Mammary epithelial cell (primary cell): ENCODE measurements at regions of chr9 and their contacts with region 1.

Region 1: GRCh38 chr9:69919461-69920061 is 98.9 kb downstream of the CFAP95 start:
- DNase-seq: peak; percentile 45
- H3K4me3 ChIP-seq: no peak overlapping the region
- H3K27ac ChIP-seq: no peak overlapping the region
- H3K4me1 ChIP-seq: peaks cover 14% of the 10 kb centered on the region
- H3K27me3 ChIP-seq: no peaks in the 10 kb centered on the region
- CTCF ChIP-seq: peak; percentile 64 to 70

Region 2: DNA sequence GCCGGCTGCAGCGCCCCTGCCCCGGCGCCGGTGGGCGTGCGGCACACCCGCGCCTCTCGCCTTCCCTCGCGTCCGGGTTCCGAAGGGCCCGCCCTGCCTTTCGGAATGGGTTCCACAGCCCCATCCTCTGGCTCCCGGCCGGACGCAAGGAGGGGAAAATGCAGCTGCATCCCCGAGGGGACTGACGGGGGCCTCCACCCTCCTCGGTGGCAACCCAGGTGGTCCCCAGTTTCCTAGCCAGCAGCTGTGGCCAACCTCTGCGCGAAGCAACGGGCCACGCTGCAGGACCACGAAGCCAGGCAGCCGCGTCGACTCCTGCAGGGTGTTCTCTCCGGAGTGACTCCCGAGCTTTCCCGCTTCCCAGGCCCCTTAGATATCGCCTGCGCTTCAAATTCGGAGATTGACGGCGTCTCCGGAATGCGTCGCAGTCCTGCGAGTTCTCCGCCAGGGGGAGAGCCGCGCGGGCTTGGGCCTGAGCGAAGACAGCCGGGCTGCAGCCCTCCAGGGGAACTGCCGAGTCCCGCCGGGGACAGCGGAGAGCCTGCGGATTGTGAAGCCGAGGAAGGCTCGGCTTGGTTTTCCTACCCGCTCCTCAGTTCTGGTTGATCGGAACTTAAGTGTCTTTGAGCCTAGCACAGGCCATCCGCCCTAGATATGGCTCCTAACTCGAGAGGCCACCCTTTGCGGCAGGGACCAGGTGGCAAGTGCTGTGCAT is 246.8 kb before region 1 on chr9:
- CTCF ChIA-PET with region 1: no interaction called
- dilution Hi-C with region 1: no loop called
- in situ Hi-C with region 1: loop called in 1 of 2 experiments (anchors 25 kb)
- intact Hi-C with region 1: loop called (anchors 2 kb)
- DNase-seq: peak; percentile 79
- H3K4me3 ChIP-seq: peak overlapping the region; percentile 47 to 71 (median 69)
- H3K27ac ChIP-seq: no peak overlapping the region
- H3K4me1 ChIP-seq: peaks cover 33% of the 10 kb centered on the region
- H3K27me3 ChIP-seq: no peaks in the 10 kb centered on the region
- CTCF ChIP-seq: peak; percentile 70 to 85

Region 3: GRCh38 chr9:69809304-69809863 is 110.2 kb before region 1 on chr9:
- CTCF ChIA-PET with region 1: interaction called, 4 read pairs
- dilution Hi-C with region 1: no loop called
- in situ Hi-C with region 1: loop called in 1 of 2 experiments (anchors 10 kb)
- intact Hi-C with region 1: loop called (anchors 1 kb)
- DNase-seq: peak; percentile 17
- H3K4me3 ChIP-seq: no peak overlapping the region
- H3K27ac ChIP-seq: no peak overlapping the region
- H3K4me1 ChIP-seq: no peaks in the 10 kb centered on the region
- H3K27me3 ChIP-seq: no peaks in the 10 kb centered on the region
- CTCF ChIP-seq: peak; percentile 38 to 41